Mucosa of descending colon (tissue), 3 donors: ENCODE measurements at regions of chr9 and their contacts with region 1.

Region 1: GRCh38 chr9:71333321-71333720 is 211.9 kb upstream of the TRPM3 start:
- DNase-seq: no peak
- ATAC-seq: no peak
- H3K4me3 ChIP-seq: no peak overlapping the region
- H3K4me1 ChIP-seq: no peaks in the 10 kb centered on the region
- CTCF ChIP-seq: no peak

Region 2: DNA sequence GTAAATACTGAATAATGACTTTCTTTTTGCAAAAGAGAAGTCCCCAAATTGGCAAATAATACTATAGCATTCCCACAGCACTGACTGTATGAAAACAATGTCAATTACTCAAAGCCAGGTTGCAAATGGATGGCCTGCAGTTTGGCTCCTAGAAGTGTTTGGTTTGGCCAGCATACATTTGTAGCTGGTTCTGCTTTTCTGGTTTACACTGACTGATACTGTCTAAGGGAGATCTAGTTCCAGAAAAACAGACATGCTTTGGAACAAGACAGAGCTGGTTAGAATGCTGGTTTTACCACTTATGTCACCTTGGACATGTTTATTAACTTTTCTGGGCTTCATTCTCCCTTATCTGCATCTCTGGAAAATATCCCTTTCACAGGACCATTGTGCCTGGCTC is 130.4 kb before region 1 on chr9:
- intact Hi-C with region 1: no loop called
- DNase-seq: no peak
- ATAC-seq: no peak
- H3K4me3 ChIP-seq: no peak overlapping the region
- H3K4me1 ChIP-seq: no peaks in the 10 kb centered on the region
- CTCF ChIP-seq: no peak

Region 3: GRCh38 chr9:71285191-71285656 is 48.1 kb before region 1 on chr9:
- intact Hi-C with region 1: loop called in 1 of 2 experiments (anchors 2 kb)
- DNase-seq: peak in 1 of 3 donors; percentile 78
- ATAC-seq: peak; percentile 87
- H3K4me3 ChIP-seq: no peak overlapping the region
- H3K4me1 ChIP-seq: no peaks in the 10 kb centered on the region
- CTCF ChIP-seq: peak; percentile 57

Region 4: DNA sequence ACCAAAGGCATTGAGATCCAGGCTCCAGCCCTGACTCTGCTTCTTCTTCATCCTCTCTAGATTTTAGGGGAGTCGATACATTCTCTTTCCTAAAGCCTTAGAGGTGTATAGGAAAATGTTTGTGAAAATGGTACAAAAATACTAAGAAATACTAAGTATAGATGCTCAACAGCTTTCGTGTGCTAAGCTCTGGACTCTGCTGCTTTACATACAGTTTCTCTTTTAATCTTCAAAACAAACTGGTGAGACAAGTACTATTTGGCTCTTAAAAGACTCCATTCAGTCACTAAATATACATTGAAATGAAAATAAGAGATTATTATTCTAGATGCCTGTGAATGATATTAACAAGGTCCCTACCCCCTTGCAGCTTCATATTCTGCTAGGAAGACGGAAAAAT is 37.4 kb before region 1 on chr9:
- intact Hi-C with region 1: loop called in 1 of 2 experiments (anchors 2 kb)
- DNase-seq: no peak
- ATAC-seq: no peak
- H3K4me3 ChIP-seq: no peak overlapping the region
- H3K4me1 ChIP-seq: no peaks in the 10 kb centered on the region
- CTCF ChIP-seq: no peak

Region 5: DNA sequence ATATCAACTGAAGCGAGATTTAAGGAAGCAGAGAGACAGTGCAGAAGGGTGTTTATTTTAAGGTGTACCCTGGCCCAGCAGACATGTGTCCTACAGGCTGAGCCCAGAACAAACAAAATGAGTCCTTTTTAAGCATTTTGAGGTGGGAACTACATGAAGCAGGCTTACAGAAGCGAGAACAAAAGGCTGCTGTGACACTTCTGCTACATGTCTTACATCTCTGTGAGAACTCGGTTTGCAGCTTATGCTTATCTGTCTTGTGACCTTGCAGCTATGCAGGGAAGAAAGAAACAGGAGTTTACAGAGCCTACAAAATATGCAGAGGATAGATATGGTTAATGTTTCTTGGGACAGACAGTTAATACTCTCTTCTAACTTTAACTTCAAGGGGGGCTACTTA is 139.1 kb after region 1 on chr9:
- intact Hi-C with region 1: no loop called
- DNase-seq: no peak
- ATAC-seq: no peak
- H3K4me3 ChIP-seq: no peak overlapping the region
- H3K4me1 ChIP-seq: no peaks in the 10 kb centered on the region
- CTCF ChIP-seq: no peak